Esophagus muscularis mucosa (tissue), 4 donors: ENCODE measurements at regions of chr1 and their contacts with region 1.

Region 1: DNA sequence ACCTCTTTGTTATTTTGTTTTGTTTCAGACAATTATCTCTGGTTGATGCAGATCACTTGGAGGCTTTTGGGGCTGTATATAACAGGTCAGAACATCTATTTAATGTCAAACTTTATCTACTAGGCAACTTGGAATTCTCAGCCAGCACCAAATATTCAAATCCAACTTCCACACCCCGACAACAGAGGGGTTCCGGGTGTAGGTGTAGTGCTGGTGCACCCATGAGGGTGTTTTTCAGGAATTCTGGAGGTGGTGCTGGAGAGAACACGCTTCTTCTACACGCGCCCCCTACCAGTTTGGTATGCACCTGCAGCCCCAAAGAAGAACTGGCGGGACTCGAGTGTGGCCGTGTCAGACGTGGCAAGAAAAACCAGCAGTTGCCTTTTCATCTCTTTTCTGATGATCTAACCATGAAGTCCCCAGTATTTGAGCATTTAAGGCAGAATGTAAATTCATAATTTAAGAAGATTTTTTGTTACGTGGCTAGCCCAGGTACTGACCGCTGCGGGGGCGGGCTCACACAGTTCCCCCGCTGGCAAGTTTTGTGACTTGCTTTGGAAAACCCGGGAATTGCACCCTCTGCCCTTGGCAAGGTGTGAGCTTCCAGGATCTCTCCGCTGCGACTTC is 462 bp upstream of the TLCD4 start:
- DNase-seq: no peak
- H3K4me3 ChIP-seq: peak overlapping the region; percentile 82 to 92 (median 85)
- H3K27ac ChIP-seq: peak overlapping the region; percentile 71 to 83 (median 77)
- H3K4me1 ChIP-seq: peaks cover 6 to 31% (median 23%) of the 10 kb centered on the region in 4 donors
- H3K27me3 ChIP-seq: no peaks in the 10 kb centered on the region
- CTCF ChIP-seq: peak; percentile 38 to 63 (median 63)
- EP300 ChIP-seq: no peak
- POLR2A ChIP-seq: no peak

Region 2: DNA sequence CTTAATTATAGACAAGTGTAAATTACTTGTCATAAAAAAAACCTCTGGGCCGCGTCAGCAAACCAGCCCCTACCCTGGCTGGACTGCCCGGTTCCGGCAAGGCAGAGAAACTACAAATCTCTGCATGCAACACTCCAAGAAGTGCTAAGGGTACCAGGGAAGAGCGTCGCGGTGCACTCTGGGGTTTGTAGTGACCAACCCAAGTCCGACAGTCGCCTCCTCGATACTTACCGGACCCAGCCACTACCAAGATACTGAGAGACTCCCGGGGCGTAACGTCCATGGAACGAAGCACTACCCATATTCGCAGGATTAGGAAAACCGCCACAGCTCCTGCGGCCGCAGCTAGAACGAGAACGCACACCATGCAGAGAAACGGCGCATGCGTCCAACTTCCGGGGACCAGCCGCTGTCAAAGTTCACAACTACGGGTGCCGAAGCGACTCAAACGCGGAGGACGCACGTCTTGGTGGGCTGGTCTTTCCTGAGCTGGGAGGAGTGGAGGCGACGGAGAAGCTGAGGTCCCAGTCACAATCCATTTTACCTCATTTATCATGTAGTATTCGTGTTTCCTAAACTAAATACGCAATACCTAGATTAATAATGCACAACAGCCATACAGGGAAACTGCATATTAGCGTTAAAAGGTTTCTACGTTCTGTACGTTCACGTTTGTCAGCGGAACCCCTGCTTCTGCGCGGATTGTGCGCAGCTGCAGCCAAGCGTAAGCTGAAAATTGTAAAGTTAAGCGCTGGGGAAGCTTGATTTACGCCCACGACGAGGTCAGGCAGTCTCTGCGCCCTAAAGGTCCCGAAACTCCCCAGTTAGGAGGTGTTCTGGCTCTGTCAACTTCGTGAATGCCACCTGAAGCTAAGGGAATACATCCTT is 43.9 kb before region 1 on chr1 and contains the start of gene ALG14:
- intact Hi-C with region 1: loop called (anchors 5 kb)
- DNase-seq: peak; percentile 99
- H3K4me3 ChIP-seq: peak within 1 kb of the TSS; percentile 75 to 80 (median 76)
- H3K27ac ChIP-seq: peak within 1 kb of the TSS; percentile 89 to 92 (median 90)
- H3K4me1 ChIP-seq: peaks cover 3 to 22% (median 13%) of the 10 kb centered on the region in 4 donors
- H3K27me3 ChIP-seq: no peaks in the 10 kb centered on the region
- CTCF ChIP-seq: no peak
- EP300 ChIP-seq: no peak
- POLR2A ChIP-seq: no peak
- total RNA-seq, gene ALG14: 0.52 to 0.83 (median 0.74) TPM